K562 (cell line): ENCODE measurements at regions of chr1 and their contacts with region 1.

Region 1: GRCh38 chr1:23772049-23772853 is 6.0 kb upstream of the PITHD1 start:
- DNase-seq: peak; percentile 74 to 94 (median 76)
- ATAC-seq: peak; percentile 90
- H3K4me3 ChIP-seq: peak overlapping the region; percentile 8; the same call in 1 of the 2 replicates
- H3K27ac ChIP-seq: peak overlapping the region; percentile 40; the same call in 1 of the 3 replicates
- H3K4me1 ChIP-seq: peaks cover 12 to 40% of the 10 kb centered on the region in 2 experiments; a peak in 3 of 5 replicates
- H3K27me3 ChIP-seq: no peaks in the 10 kb centered on the region
- CTCF ChIP-seq: peak; percentile 96 to 98 (median 97)
- EP300 ChIP-seq: no peak
- POLR2A ChIP-seq: no peak
- RAD21 ChIP-seq: peak; percentile 74 to 94

Region 2: GRCh38 chr1:23790696-23791515 is 18.7 kb after region 1 on chr1 and contains the start of gene LYPLA2:
- CTCF ChIA-PET with region 1: no interaction called
- POLR2A ChIA-PET with region 1: interaction called, 197 read pairs
- in situ Hi-C with region 1: no loop called
- intact Hi-C with region 1: no loop called
- DNase-seq: peak; percentile 85 to 98 (median 90)
- ATAC-seq: peak; percentile 92
- H3K4me3 ChIP-seq: peak within 1 kb of the TSS; percentile 58
- H3K27ac ChIP-seq: peak within 1 kb of the TSS; percentile 90
- H3K4me1 ChIP-seq: peaks cover 31 to 49% of the 10 kb centered on the region in 2 experiments
- H3K27me3 ChIP-seq: no peaks in the 10 kb centered on the region
- CTCF ChIP-seq: no peak
- EP300 ChIP-seq: peak; percentile 23; the same call in 1 of the 2 replicates
- POLR2A ChIP-seq: peak; percentile 78
- RAD21 ChIP-seq: no peak
- polyA plus RNA-seq, gene LYPLA2: 3.9 to 9.9 TPM

Region 3: GRCh38 chr1:23800400-23801337 is 28.4 kb after region 1 on chr1 and contains the start of gene GALE:
- CTCF ChIA-PET with region 1: no interaction called
- POLR2A ChIA-PET with region 1: interaction called, 197 read pairs
- in situ Hi-C with region 1: no loop called
- intact Hi-C with region 1: loop called (anchors 1 kb)
- DNase-seq: peak; percentile 96 to 100 (median 97)
- ATAC-seq: peak; percentile 90
- H3K4me3 ChIP-seq: peak within 1 kb of the TSS; percentile 80
- H3K27ac ChIP-seq: peak within 1 kb of the TSS; percentile 74
- H3K4me1 ChIP-seq: peaks cover 21 to 40% of the 10 kb centered on the region in 2 experiments
- H3K27me3 ChIP-seq: no peaks in the 10 kb centered on the region
- CTCF ChIP-seq: no peak
- EP300 ChIP-seq: peak; percentile 63; the same call in 1 of the 2 replicates
- POLR2A ChIP-seq: peak; percentile 89
- RAD21 ChIP-seq: no peak
- polyA plus RNA-seq, gene GALE: 8.4 to 48.4 TPM

Region 4: DNA sequence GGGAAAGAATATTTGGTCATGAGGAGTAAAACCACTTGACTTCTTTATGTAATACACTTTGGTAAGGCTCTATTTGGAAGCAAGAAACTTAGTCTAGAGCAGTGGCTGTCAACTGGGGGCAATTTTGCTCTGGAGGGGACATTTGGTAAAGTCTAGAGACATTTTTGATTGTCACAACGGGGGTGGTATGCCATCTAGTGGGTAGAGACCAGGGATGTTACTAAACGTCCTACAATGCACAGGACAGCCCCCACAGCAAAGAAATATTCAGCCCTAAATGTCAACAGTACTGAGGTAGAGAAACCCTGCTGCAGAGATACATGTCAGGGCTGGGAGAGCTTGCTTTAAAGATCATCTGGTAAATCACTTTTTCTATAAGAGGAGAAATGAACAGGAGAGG is 82.3 kb after region 1 on chr1:
- CTCF ChIA-PET with region 1: no interaction called
- POLR2A ChIA-PET with region 1: no interaction called
- in situ Hi-C with region 1: no loop called
- intact Hi-C with region 1: loop called (anchors 1 kb)
- DNase-seq: peak in 3 of 4 experiments; percentile 27 to 53 (median 34)
- ATAC-seq: peak; percentile 88
- H3K4me3 ChIP-seq: no peak overlapping the region
- H3K27ac ChIP-seq: no peak overlapping the region
- H3K4me1 ChIP-seq: no peaks in the 10 kb centered on the region
- H3K27me3 ChIP-seq: no peaks in the 10 kb centered on the region
- CTCF ChIP-seq: peak; percentile 55 to 69 (median 63)
- EP300 ChIP-seq: no peak
- POLR2A ChIP-seq: no peak
- RAD21 ChIP-seq: peak; percentile 39 to 63

Region 5: DNA sequence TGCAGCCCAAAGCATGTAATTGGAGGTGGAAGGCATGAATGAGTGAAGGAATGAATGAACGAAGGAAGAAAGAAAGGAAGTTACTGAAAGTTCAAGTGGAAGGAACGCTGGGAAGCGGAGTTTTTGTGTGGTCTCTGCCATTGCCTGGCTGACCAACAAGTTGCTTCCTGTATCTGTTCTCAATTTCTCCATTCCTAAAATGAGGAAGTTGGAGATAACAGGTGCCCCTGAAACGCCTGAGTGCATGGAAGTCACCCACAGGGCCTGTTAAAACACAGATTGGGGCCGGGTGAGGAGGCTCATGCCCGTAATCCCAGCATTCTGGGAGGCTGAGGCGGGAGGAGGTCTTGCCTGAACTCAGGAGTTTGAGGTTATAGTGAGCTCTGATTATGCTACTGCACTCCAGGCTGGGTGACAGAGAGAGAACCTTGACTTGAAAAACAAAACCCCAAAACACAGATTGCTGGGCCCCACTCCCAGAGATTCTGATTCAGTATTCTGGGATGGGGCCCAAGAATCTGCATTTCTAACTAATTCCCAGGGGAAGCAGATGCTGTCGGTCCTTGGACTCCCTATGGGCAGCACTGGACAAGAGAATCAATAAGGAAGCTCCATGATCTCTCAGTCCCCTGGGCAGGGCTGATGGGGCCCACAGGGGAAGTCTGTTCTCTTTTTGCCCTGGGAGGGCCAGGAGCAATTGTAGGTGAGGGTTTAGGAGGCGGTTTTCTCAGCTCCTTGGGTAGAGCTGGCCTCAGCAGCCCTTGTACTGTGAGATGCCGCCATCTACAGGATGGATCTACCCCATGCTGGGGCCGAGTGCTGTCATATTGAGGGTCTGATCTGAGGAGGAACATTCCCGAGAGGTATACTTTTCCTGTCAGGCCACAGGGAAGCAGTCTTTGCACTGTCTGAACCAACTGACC is 144.2 kb after region 1 on chr1:
- CTCF ChIA-PET with region 1: interaction called, 12 read pairs
- POLR2A ChIA-PET with region 1: interaction called, 4 read pairs
- in situ Hi-C with region 1: no loop called
- intact Hi-C with region 1: loop called (anchors 1 kb)
- DNase-seq: peak; percentile 84 to 90 (median 86)
- ATAC-seq: peak; percentile 93
- H3K4me3 ChIP-seq: no peak overlapping the region
- H3K27ac ChIP-seq: peak overlapping the region; percentile 9; the same call in 1 of the 3 replicates
- H3K4me1 ChIP-seq: peaks cover 30 to 48% of the 10 kb centered on the region in 2 experiments
- H3K27me3 ChIP-seq: no peaks in the 10 kb centered on the region
- CTCF ChIP-seq: peak; percentile 90 to 96 (median 95)
- EP300 ChIP-seq: no peak
- POLR2A ChIP-seq: no peak
- RAD21 ChIP-seq: peak; percentile 91 to 96